Transverse colon (tissue), 4 donors: ENCODE measurements at regions of chr1 and their contacts with region 1.

Region 1: GRCh38 chr1:165129568-165130164 is 226.8 kb downstream of the LMX1A start:
- DNase-seq: peak; percentile 63
- H3K4me3 ChIP-seq: no peak overlapping the region
- H3K27ac ChIP-seq: no peak overlapping the region
- H3K4me1 ChIP-seq: no peaks in the 10 kb centered on the region
- H3K27me3 ChIP-seq: peaks cover 19% of the 10 kb centered on the region
- CTCF ChIP-seq: peak; percentile 25 to 42 (median 34)
- EP300 ChIP-seq: no peak
- POLR2A ChIP-seq: no peak

Region 2: GRCh38 chr1:165907256-165907857 is 777.7 kb after region 1 on chr1:
- in situ Hi-C with region 1: no loop called
- intact Hi-C with region 1: loop called (anchors 5 kb)
- DNase-seq: no peak
- H3K4me3 ChIP-seq: no peak overlapping the region
- H3K27ac ChIP-seq: no peak overlapping the region
- H3K4me1 ChIP-seq: peaks cover 0 to 27% (median 16%) of the 10 kb centered on the region in 4 donors
- H3K27me3 ChIP-seq: no peaks in the 10 kb centered on the region
- CTCF ChIP-seq: no peak
- EP300 ChIP-seq: no peak
- POLR2A ChIP-seq: no peak

Region 3: DNA sequence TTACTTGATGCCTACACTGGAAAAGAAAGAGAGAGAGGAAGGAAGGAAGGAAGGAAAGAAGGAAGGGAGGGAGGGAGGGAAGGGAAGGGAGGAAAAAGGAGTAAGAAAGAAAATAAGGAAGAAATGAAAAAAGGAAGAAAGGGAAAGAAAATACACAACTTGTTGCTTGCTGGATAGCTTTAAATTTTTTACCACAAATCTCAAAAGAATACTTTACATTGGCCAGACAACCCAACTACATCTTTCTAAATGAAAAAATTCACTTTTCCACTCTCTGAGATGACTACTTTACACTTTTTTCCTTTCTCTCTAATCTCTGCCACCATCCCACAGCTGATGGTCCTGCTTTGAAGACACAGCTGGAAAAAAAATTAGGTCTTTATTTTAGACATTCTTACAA is 1266.1 kb after region 1 on chr1:
- in situ Hi-C with region 1: no loop called
- intact Hi-C with region 1: loop called (anchors 5 kb)
- DNase-seq: no peak
- H3K4me3 ChIP-seq: no peak overlapping the region
- H3K27ac ChIP-seq: no peak overlapping the region
- H3K4me1 ChIP-seq: no peaks in the 10 kb centered on the region
- H3K27me3 ChIP-seq: no peaks in the 10 kb centered on the region
- CTCF ChIP-seq: no peak
- EP300 ChIP-seq: no peak
- POLR2A ChIP-seq: no peak